ENCODE measurements at regions of chr22 and their contacts with region 1.

Region 1: DNA sequence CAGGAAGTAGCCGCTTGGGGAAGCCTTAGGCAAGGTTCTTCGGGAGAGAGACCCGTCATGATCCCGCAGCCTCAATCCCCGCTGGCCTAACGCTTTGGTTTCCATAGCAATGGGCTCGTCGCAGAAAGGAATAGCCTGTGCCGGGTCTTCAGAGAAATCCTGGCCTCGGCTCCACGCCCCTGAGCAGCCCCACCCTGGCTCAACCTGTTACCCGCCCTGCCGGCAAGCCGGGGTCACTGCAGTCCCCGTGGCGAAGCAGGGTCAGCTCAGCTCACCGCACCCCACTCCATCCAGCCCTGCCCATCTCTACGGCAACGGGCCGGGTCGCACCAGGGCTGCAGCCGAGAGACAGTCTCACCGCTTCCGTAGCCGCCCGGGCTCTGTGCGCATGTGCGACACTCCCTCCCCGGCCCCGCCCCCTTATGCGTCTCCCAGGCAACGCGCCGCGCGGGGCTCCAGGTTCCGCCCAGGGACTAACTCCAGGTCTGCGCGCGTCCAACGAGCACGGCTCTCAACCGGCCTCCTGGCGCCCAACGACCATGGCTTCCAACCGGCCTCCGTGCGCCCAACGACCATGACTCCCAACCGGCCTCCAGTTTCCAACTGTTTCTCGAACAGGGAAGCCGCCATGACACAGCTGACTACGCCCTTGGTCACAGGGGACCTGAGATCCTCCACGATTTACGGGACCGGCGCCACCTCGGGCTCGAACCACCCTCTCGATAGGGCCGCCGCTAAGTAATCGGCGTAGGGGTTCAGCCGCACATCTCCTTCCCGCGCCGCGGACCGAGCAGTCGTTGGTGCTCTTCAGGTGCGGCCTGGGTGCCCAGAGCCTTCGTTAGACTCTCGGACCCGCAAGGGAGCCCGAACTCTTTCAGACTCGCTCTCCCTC is at the start of gene DUSP18:
- DNase-seq: peak; percentile 84 to 97
- H3K4me3 ChIP-seq: peak within 1 kb of the TSS; percentile 65
- H3K27ac ChIP-seq: no peak within 1 kb of the TSS
- H3K4me1 ChIP-seq: peaks cover 14% of the 10 kb centered on the region
- H3K27me3 ChIP-seq: no peaks in the 10 kb centered on the region
- CTCF ChIP-seq: peak; percentile 61
- total RNA-seq, gene DUSP18: 9.9 and 11.0 TPM in 2 replicates

Region 2: GRCh38 chr22:28728621-28729313 is 1939.0 kb before region 1 on chr22:
- CTCF ChIA-PET with region 1: no interaction called
- POLR2A ChIA-PET with region 1: no interaction called
- intact Hi-C with region 1: no loop called
- DNase-seq: no peak
- H3K4me3 ChIP-seq: no peak overlapping the region
- H3K27ac ChIP-seq: no peak overlapping the region
- H3K4me1 ChIP-seq: no peaks in the 10 kb centered on the region
- H3K27me3 ChIP-seq: no peaks in the 10 kb centered on the region
- CTCF ChIP-seq: no peak

Region 3: DNA sequence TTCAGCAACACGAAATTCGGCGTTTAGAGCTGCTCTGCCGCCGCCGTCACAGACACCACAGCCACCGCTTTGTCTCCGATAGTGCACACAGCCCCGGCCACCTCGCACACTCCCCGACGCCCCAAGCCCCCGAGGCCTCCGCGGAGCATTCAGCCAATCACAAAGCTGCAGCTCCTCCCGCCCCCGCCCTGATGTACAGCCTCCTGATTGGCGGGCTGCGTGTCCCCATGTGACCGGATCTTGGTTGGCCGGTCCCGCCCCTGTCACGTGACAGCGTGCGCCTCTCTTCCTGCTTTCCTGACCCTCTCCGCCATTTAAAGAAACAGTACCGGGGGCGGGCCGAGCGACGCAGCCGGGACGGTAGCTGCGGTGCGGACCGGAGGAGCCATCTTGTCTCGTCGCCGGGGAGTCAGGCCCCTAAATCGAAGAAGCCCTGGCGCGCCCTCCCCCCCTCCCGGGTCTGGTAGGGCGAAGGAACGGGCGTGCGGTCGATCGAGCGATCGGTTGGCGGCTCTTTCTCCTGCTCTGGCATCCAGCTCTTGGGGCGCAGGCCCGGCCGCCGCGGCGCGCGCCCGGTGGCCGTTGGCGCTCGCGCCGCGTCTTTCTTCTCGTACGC is 301.3 kb after region 1 on chr22 and contains the start of gene TUG1:
- CTCF ChIA-PET with region 1: no interaction called
- POLR2A ChIA-PET with region 1: interaction called, 25 read pairs
- intact Hi-C with region 1: no loop called
- DNase-seq: peak; percentile 95 to 97
- H3K4me3 ChIP-seq: peak within 1 kb of the TSS; percentile 89
- H3K27ac ChIP-seq: peak within 1 kb of the TSS; percentile 78
- H3K4me1 ChIP-seq: peaks cover 32% of the 10 kb centered on the region; the same call in 1 of the 2 replicates
- H3K27me3 ChIP-seq: no peaks in the 10 kb centered on the region
- CTCF ChIP-seq: no peak
- total RNA-seq, gene TUG1: 80.6 and 105 TPM in 2 replicates